GM12878 (cell line): ENCODE measurements at regions of chr1 and their contacts with region 1.

Region 1: DNA sequence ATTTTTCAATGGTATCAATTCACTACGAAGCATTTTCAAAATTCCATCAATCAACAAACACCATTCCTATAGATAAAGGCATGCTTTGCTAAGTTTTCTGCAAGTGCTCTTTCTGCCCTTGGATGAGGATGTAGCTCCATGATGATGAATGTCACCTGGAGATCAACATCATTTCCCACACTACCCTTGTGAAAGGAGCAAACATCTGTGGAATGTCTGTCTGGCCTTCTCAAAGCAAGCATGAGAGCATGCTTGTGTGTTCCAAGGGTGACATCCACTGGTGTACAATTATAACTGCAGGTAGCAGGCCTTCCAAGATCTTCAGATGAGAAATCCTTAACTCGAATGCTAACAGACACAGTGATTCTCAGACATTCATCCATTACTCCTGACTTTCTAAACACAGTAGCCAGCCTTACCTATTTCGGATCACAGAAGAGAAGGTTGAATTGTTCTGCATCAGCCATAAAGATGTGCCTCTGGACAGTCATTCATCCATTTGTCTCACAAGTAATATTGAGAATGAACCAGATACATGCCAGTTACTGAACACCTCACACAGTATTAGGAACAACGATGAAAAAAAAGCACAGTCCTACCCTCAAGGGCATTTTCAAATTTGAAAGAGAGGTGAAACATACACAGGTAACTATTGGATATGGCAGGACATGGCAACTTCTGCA is 162.4 kb downstream of the TPR start:
- DNase-seq: no peak
- ATAC-seq: peak; percentile 87
- H3K4me3 ChIP-seq: no peak overlapping the region
- H3K27ac ChIP-seq: no peak overlapping the region
- H3K4me1 ChIP-seq: no peaks in the 10 kb centered on the region
- H3K27me3 ChIP-seq: no peaks in the 10 kb centered on the region
- CTCF ChIP-seq: peak; percentile 64 to 88 (median 82); a peak in 4 of 6 replicates
- EP300 ChIP-seq: no peak
- POLR2A ChIP-seq: no peak
- RAD21 ChIP-seq: peak; percentile 97

Region 2: GRCh38 chr1:185720633-185721272 is 491.9 kb before region 1 on chr1:
- CTCF ChIA-PET with region 1: interaction called, 9 read pairs
- POLR2A ChIA-PET with region 1: no interaction called
- RAD21 ChIA-PET with region 1: interaction called, 3 read pairs
- SMC1A ChIA-PET with region 1: interaction called, 4 read pairs
- in situ Hi-C with region 1: no loop called
- intact Hi-C with region 1: loop called (anchors 1 kb)
- DNase-seq: no peak
- ATAC-seq: 0 out of 3 replicates have a peak, but pooled peaks have one; percentile 48
- H3K4me3 ChIP-seq: no peak overlapping the region
- H3K27ac ChIP-seq: no peak overlapping the region
- H3K4me1 ChIP-seq: no peaks in the 10 kb centered on the region
- H3K27me3 ChIP-seq: no peaks in the 10 kb centered on the region
- CTCF ChIP-seq: peak; percentile 32 to 37 (median 33); a peak in 3 of 6 replicates
- EP300 ChIP-seq: no peak
- POLR2A ChIP-seq: no peak
- RAD21 ChIP-seq: 0 out of 2 replicates have a peak, but pooled peaks have one; percentile 34

Region 3: GRCh38 chr1:185813401-185813979 is 399.2 kb before region 1 on chr1:
- CTCF ChIA-PET with region 1: interaction called, 3 read pairs
- POLR2A ChIA-PET with region 1: no interaction called
- RAD21 ChIA-PET with region 1: interaction called, 3 read pairs
- SMC1A ChIA-PET with region 1: interaction called, 3 read pairs
- in situ Hi-C with region 1: loop called (anchors 5 kb)
- intact Hi-C with region 1: loop called (anchors 1 kb)
- DNase-seq: no peak
- ATAC-seq: peak; percentile 79
- H3K4me3 ChIP-seq: no peak overlapping the region
- H3K27ac ChIP-seq: no peak overlapping the region
- H3K4me1 ChIP-seq: no peaks in the 10 kb centered on the region
- H3K27me3 ChIP-seq: no peaks in the 10 kb centered on the region
- CTCF ChIP-seq: peak; percentile 35 to 50 (median 48); a peak in 4 of 6 replicates
- EP300 ChIP-seq: no peak
- POLR2A ChIP-seq: no peak
- RAD21 ChIP-seq: peak; percentile 55

Region 4: GRCh38 chr1:185926562-185926961 is 286.1 kb before region 1 on chr1:
- CTCF ChIA-PET with region 1: no interaction called
- POLR2A ChIA-PET with region 1: no interaction called
- RAD21 ChIA-PET with region 1: no interaction called
- SMC1A ChIA-PET with region 1: no interaction called
- in situ Hi-C with region 1: no loop called
- intact Hi-C with region 1: no loop called
- DNase-seq: no peak
- ATAC-seq: no peak
- H3K4me3 ChIP-seq: no peak overlapping the region
- H3K27ac ChIP-seq: no peak overlapping the region
- H3K4me1 ChIP-seq: no peaks in the 10 kb centered on the region
- H3K27me3 ChIP-seq: no peaks in the 10 kb centered on the region
- CTCF ChIP-seq: no peak
- EP300 ChIP-seq: no peak
- POLR2A ChIP-seq: no peak
- RAD21 ChIP-seq: no peak

Region 5: DNA sequence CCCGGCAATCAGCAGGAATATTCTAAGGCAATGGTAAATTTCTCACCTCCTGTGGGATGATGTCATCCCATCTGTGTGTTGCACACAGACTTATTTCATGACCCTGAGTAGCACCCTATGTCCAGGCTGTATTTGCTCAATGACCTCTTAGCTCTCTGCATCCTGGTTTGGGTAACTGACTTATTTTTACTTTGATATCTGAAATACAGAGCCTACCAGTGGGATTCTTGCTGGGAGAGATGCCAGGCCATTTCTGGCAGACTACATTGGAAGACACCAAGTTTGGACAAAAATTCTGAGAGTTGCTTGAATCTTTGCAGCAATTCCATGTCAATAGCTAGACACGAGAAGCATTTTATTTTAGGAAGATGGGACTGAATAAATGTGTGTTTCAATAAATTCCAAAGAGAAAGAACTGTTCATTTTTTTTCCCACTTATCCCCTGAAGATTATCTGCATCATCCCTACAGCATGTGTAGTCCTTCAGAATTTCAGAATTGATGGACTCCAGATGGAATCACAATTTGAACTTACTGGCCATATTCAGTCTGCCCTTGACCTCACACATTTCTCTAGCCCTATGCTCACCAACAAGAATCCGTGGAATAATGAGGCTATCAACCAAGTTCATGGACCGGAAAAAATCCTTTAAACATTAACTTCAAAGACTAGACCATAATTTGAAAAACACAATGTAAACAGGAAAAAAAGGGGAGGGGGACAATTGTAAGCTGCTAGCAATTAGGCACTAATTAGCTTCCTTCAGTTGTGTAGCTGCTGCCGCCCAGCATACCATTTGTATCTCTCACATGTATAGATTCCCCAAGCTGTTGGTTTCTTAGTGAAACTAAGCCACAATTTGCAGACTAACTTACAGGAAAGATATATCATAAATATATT is 252.0 kb before region 1 on chr1:
- CTCF ChIA-PET with region 1: no interaction called
- POLR2A ChIA-PET with region 1: no interaction called
- RAD21 ChIA-PET with region 1: no interaction called
- SMC1A ChIA-PET with region 1: no interaction called
- in situ Hi-C with region 1: no loop called
- intact Hi-C with region 1: no loop called
- DNase-seq: no peak
- ATAC-seq: no peak
- H3K4me3 ChIP-seq: no peak overlapping the region
- H3K27ac ChIP-seq: no peak overlapping the region
- H3K4me1 ChIP-seq: no peaks in the 10 kb centered on the region
- H3K27me3 ChIP-seq: no peaks in the 10 kb centered on the region
- CTCF ChIP-seq: no peak
- EP300 ChIP-seq: no peak
- POLR2A ChIP-seq: no peak
- RAD21 ChIP-seq: no peak

Region 6: DNA sequence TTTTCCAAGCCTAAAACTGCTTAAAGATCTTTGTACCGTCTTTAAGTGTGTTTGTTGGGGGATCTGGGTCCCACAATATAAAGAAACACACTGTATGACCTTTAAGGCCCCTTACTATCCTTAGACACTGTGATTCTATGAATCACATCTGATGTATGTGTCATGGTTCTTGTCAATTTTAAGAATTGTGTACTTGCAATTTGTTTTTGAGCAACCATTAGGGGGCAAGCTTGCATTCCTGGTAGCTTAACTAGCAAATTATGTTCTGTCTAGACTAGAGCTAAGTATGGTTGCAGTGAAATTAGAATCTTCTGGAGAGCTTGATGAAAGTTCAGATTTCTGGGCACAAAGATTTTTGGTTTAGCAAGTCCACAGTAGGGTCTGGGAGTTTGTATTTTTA is 57.1 kb before region 1 on chr1:
- CTCF ChIA-PET with region 1: interaction called, 30 read pairs
- POLR2A ChIA-PET with region 1: no interaction called
- RAD21 ChIA-PET with region 1: interaction called, 12 read pairs
- SMC1A ChIA-PET with region 1: interaction called, 8 read pairs
- in situ Hi-C with region 1: no loop called
- intact Hi-C with region 1: loop called (anchors 1 kb)
- DNase-seq: no peak
- ATAC-seq: peak; percentile 79
- H3K4me3 ChIP-seq: no peak overlapping the region
- H3K27ac ChIP-seq: no peak overlapping the region
- H3K4me1 ChIP-seq: no peaks in the 10 kb centered on the region
- H3K27me3 ChIP-seq: peaks cover 0 to 4% of the 10 kb centered on the region in 2 experiments; a peak in 2 of 4 replicates
- CTCF ChIP-seq: peak; percentile 45 to 65 (median 51); a peak in 4 of 6 replicates
- EP300 ChIP-seq: no peak
- POLR2A ChIP-seq: no peak
- RAD21 ChIP-seq: peak; percentile 53